Psoas muscle (tissue), 8 donors: ENCODE measurements at regions of chr1 and their contacts with region 1.

Region 1: GRCh38 chr1:107704911-107705310 is 260.1 kb downstream of the VAV3 start:
- DNase-seq: no peak
- ATAC-seq: no peak
- H3K4me3 ChIP-seq: no peak overlapping the region
- H3K27ac ChIP-seq: no peak overlapping the region
- H3K4me1 ChIP-seq: no peaks in the 10 kb centered on the region
- H3K27me3 ChIP-seq: peaks cover 0 to 2% (median 0%) of the 10 kb centered on the region in 3 donors
- CTCF ChIP-seq: no peak

Region 2: GRCh38 chr1:107662971-107663370 is 41.9 kb before region 1 on chr1:
- intact Hi-C with region 1: no loop called
- DNase-seq: no peak
- ATAC-seq: no peak
- H3K4me3 ChIP-seq: no peak overlapping the region
- H3K27ac ChIP-seq: no peak overlapping the region
- H3K4me1 ChIP-seq: no peaks in the 10 kb centered on the region
- H3K27me3 ChIP-seq: no peaks in the 10 kb centered on the region
- CTCF ChIP-seq: no peak

Region 3: DNA sequence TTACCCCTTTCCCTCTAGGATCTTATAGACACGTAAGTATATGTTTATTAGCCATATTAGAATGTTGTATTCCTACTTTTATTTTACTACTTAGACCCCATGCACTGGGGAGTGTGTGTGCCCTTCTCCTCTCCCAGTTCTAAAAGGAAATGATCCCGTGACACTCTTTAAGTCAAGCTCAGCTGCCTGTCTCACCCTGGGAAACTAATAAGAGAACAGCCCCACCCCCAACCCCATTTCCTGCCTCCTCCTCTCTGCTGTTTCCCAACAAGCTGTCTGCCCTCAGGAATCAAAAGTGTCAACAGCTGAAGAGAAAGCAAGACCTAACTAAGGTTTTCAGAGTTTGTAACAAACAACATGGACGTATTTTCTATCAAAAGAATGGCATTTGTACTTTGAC is 352.6 kb after region 1 on chr1:
- intact Hi-C with region 1: no loop called
- DNase-seq: peak in 1 of 2 donors; percentile 22
- ATAC-seq: no peak
- H3K4me3 ChIP-seq: no peak overlapping the region
- H3K27ac ChIP-seq: no peak overlapping the region
- H3K4me1 ChIP-seq: no peaks in the 10 kb centered on the region
- H3K27me3 ChIP-seq: no peaks in the 10 kb centered on the region
- CTCF ChIP-seq: no peak

Region 4: DNA sequence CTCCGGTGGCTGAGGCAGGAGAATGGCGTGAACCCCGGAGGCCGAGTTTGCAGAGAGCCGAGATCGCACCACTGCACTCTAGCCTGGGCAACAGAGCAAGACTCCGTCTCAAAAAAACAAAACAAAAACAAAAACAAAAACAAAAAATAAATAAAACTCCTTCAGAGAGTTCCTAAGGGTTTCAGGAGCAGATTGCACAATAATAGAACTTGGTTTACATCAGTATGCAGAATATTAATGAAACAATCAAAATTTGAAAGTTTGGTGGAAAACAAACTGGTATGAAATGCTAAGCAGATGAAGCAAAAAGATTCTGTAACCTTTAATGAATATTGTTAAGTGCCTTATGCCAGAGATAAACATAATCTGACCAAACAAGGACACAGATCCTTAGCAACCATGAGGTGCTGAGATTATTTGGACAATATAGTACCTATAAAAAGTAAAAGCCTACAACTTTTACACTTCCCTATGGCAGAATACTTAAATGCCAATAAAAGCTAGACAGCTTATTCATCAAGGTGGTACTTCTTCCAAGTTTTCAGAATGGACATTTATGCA is 454.1 kb after region 1 on chr1:
- intact Hi-C with region 1: loop called in 1 of 2 experiments (anchors 5 kb)
- DNase-seq: no peak
- ATAC-seq: no peak
- H3K4me3 ChIP-seq: no peak overlapping the region
- H3K27ac ChIP-seq: no peak overlapping the region
- H3K4me1 ChIP-seq: no peaks in the 10 kb centered on the region
- H3K27me3 ChIP-seq: no peaks in the 10 kb centered on the region
- CTCF ChIP-seq: no peak